ENCODE measurements at regions of chr5 and their contacts with region 1.

Region 1: GRCh38 chr5:38809388-38810359 is 36.1 kb upstream of the OSMR start:
- DNase-seq: peak; percentile 89
- H3K4me3 ChIP-seq: no peak overlapping the region
- H3K27ac ChIP-seq: peak overlapping the region in 1 of 2 donors; percentile 24
- H3K4me1 ChIP-seq: peaks cover 0 to 26% (median 11%) of the 10 kb centered on the region in 4 donors
- H3K27me3 ChIP-seq: no peaks in the 10 kb centered on the region
- CTCF ChIP-seq: peak; percentile 83 to 91

Region 2: GRCh38 chr5:38387161-38387560 is 422.5 kb before region 1 on chr5:
- intact Hi-C with region 1: loop called (anchors 5 kb)
- DNase-seq: no peak
- H3K4me3 ChIP-seq: no peak overlapping the region
- H3K27ac ChIP-seq: no peak overlapping the region
- H3K4me1 ChIP-seq: no peaks in the 10 kb centered on the region
- H3K27me3 ChIP-seq: no peaks in the 10 kb centered on the region
- CTCF ChIP-seq: no peak

Region 3: DNA sequence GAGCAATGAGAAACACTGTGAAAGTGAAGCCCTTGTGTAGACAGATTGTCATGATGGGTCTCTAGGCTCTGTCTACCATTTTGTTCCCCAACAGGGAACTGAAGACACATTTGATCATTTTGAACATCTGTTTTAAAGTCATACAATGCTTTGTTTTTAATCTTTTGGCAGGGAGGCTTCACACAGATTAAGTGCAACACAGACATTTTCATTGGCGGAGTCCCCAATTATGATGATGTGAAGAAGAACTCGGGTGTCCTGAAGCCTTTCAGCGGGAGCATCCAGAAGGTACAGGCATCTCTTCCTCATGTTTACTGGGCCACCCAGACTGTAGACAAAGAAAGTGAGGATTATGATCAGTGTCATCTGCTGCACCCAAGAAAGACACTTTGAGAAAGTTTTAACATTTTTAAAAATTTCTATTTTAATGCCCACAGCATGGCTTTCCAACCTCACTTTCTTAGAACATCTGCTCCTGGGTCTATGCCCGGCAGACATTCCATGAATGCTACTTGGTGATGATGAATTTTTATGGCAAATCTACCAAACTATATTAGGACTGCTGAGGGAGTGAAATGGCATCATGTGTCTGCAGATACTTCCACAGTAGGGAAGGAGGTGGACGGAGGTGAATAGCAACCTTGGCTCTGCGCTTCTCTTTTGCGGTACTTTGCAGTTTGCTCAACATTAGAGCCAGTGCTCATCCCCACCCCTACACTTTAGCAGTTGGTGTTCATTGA is 374.5 kb before region 1 on chr5:
- intact Hi-C with region 1: loop called (anchors 5 kb)
- DNase-seq: no peak
- H3K4me3 ChIP-seq: no peak overlapping the region
- H3K27ac ChIP-seq: peak overlapping the region; percentile 5 to 29
- H3K4me1 ChIP-seq: peaks cover 0 to 46% (median 36%) of the 10 kb centered on the region in 4 donors
- H3K27me3 ChIP-seq: no peaks in the 10 kb centered on the region
- CTCF ChIP-seq: no peak

Region 4: GRCh38 chr5:38672059-38672788 is 137.4 kb before region 1 on chr5:
- intact Hi-C with region 1: loop called (anchors 10 kb)
- DNase-seq: no peak
- H3K4me3 ChIP-seq: no peak overlapping the region
- H3K27ac ChIP-seq: no peak overlapping the region
- H3K4me1 ChIP-seq: peaks cover 0 to 13% (median 2%) of the 10 kb centered on the region in 4 donors
- H3K27me3 ChIP-seq: no peaks in the 10 kb centered on the region
- CTCF ChIP-seq: no peak

Region 5: DNA sequence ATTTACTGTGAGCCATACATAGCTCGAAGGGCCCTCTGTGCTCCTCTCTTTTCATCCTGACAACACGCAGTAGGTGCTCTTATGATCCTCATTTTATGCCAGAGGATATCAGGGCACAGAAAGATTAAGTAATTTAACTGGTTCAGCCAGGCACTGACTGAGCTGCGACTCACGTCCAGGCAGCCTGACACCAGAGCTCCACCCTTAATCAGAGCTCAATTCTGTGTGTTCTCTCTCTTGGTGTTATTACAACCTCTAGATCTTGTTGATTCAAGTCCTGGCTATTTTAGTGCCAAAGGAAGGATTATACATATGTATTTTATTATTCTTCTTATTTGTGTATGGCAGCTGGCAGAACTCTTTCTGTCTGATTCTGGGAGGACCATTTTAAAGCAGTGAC is 95.8 kb after region 1 on chr5:
- intact Hi-C with region 1: no loop called
- DNase-seq: no peak
- H3K4me3 ChIP-seq: no peak overlapping the region
- H3K27ac ChIP-seq: no peak overlapping the region
- H3K4me1 ChIP-seq: no peaks in the 10 kb centered on the region
- H3K27me3 ChIP-seq: no peaks in the 10 kb centered on the region
- CTCF ChIP-seq: no peak